Heart right ventricle (tissue), 16 donors: ENCODE measurements at regions of chr18 and their contacts with region 1.

Region 1: GRCh38 chr18:41579185-41579584 is 375.8 kb upstream of the PIK3C3 start:
- DNase-seq: no peak
- ATAC-seq: no peak
- H3K4me3 ChIP-seq: no peak overlapping the region
- H3K27ac ChIP-seq: no peak overlapping the region
- H3K4me1 ChIP-seq: no peaks in the 10 kb centered on the region
- H3K27me3 ChIP-seq: no peaks in the 10 kb centered on the region
- CTCF ChIP-seq: no peak

Region 2: GRCh38 chr18:41524674-41525470 is 54.3 kb before region 1 on chr18:
- intact Hi-C with region 1: loop called in 1 of 10 experiments (anchors 10 kb)
- DNase-seq: no peak
- ATAC-seq: no peak
- H3K4me3 ChIP-seq: no peak overlapping the region
- H3K27ac ChIP-seq: no peak overlapping the region
- H3K4me1 ChIP-seq: no peaks in the 10 kb centered on the region
- H3K27me3 ChIP-seq: no peaks in the 10 kb centered on the region
- CTCF ChIP-seq: no peak